ENCODE measurements at regions of chr14 and their contacts with region 1.

Region 1: DNA sequence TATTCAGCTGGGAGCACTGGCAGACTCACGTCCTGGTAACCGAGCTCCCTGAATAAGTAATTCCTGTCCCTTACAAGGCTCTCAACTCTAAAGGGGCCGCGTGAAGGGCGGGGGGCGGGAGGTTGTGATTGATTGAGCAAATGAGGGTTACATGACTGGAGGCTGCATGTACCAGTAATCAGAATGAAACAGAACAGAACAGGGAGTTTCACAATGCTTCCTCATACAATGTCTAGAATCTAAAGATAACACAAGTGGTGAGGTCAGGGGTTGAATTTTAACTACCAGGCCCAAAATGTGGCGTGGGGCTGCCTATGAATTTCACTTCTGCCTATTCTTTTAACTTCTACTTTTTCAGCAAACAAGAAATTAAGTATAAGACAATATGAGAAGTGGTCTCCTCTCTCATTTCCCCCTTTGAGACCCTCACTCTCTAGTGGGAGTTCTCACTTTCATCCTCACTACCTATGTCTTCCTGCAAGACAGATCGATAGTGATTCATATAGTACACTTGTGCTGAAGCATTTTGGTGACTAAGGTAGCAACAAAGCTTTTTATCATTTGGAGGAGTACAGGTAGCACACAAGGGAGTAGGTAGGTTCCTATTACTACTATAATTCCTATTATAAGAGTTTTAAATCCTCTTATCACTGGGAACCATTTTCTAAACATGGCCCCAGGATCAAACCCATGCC is 239.8 kb downstream of the KTN1 start:
- H3K4me3 Mint-ChIP-seq: no peak overlapping the region
- H3K27ac Mint-ChIP-seq: peak overlapping the region; percentile 81
- H3K4me1 Mint-ChIP-seq: peaks cover 31% of the 10 kb centered on the region
- H3K27me3 Mint-ChIP-seq: peaks cover 3% of the 10 kb centered on the region

Region 2: DNA sequence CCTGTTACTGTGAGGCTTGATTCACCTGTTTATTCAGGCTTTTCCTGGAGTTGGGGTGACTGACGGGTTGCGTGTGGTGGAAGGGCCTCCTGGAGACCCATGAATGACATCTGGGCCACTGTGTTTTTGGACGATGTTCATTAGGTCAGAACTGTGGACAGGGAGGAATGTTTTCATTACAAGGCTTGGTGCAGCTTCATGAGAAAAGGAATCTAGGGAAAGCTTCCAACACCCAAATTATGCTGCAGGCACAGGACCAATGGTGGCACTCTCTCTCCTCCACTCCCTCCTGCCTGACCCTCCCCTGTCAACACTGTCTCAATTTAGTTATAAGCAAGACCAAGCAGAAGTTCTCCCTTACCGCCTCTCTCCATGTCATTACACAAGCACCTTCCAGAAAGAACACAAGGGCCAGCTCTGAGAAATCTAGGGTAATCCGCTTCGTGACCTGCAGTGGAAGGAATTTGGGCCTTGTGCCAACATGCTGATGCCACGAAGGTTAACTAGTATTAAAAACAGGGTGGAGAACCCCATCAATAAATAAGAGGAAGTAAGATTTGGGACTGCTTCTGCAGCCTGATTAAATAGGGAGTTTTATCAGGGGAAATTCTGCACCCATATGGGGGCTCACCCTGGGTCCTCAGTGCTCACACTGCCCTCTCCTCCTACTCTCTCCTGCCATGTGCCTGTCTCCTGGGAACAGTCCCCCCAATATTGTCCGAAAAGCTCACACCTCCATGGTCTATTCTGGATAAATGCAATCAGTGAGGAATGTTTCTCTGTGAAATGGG is 39.4 kb before region 1 on chr14:
- intact Hi-C with region 1: loop called (anchors 5 kb)
- H3K4me3 Mint-ChIP-seq: no peak overlapping the region
- H3K27ac Mint-ChIP-seq: peak overlapping the region; percentile 44
- H3K4me1 Mint-ChIP-seq: peaks cover 48% of the 10 kb centered on the region
- H3K27me3 Mint-ChIP-seq: no peaks in the 10 kb centered on the region

Region 3: GRCh38 chr14:56117765-56118610 is 298.2 kb after region 1 on chr14 and contains the start of gene PELI2:
- intact Hi-C with region 1: loop called (anchors 10 kb)
- H3K4me3 Mint-ChIP-seq: peak within 1 kb of the TSS; percentile 94
- H3K27ac Mint-ChIP-seq: peak within 1 kb of the TSS; percentile 85
- H3K4me1 Mint-ChIP-seq: peaks cover 55% of the 10 kb centered on the region
- H3K27me3 Mint-ChIP-seq: no peaks in the 10 kb centered on the region

Region 4: GRCh38 chr14:56339855-56340701 is 520.3 kb after region 1 on chr14:
- intact Hi-C with region 1: no loop called
- H3K4me3 Mint-ChIP-seq: no peak overlapping the region
- H3K27ac Mint-ChIP-seq: no peak overlapping the region
- H3K4me1 Mint-ChIP-seq: peaks cover 24% of the 10 kb centered on the region
- H3K27me3 Mint-ChIP-seq: no peaks in the 10 kb centered on the region

Measured in dendritic cell treated with granulocyte-macrophage colony-stimulating factor and Interleukin-4, amounts not matched to agents 40 ng/mL and 50 ng/mL, for 4 days (primary cell).